ENCODE measurements at regions of chr17 and their contacts with region 1.

Region 1: GRCh38 chr17:51322390-51323029 is 62.2 kb downstream of the UTP18 start:
- DNase-seq: peak; percentile 8
- H3K4me3 Mint-ChIP-seq: no peak overlapping the region
- H3K27ac Mint-ChIP-seq: no peak overlapping the region
- H3K4me1 Mint-ChIP-seq: no peaks in the 10 kb centered on the region
- H3K27me3 Mint-ChIP-seq: peaks cover 5% of the 10 kb centered on the region

Region 2: GRCh38 chr17:51000835-51001638 is 321.5 kb before region 1 on chr17:
- CTCF ChIA-PET with region 1: no interaction called
- intact Hi-C with region 1: loop called (anchors 2 kb)
- DNase-seq: peak; percentile 18
- H3K4me3 Mint-ChIP-seq: no peak overlapping the region
- H3K27ac Mint-ChIP-seq: no peak overlapping the region
- H3K4me1 Mint-ChIP-seq: no peaks in the 10 kb centered on the region
- H3K27me3 Mint-ChIP-seq: no peaks in the 10 kb centered on the region

Region 3: GRCh38 chr17:51533219-51533618 is 210.7 kb after region 1 on chr17:
- CTCF ChIA-PET with region 1: interaction called, 4 read pairs
- intact Hi-C with region 1: loop called (anchors 1 kb)
- DNase-seq: no peak
- H3K4me3 Mint-ChIP-seq: no peak overlapping the region
- H3K27ac Mint-ChIP-seq: no peak overlapping the region
- H3K4me1 Mint-ChIP-seq: no peaks in the 10 kb centered on the region
- H3K27me3 Mint-ChIP-seq: no peaks in the 10 kb centered on the region

Region 4: DNA sequence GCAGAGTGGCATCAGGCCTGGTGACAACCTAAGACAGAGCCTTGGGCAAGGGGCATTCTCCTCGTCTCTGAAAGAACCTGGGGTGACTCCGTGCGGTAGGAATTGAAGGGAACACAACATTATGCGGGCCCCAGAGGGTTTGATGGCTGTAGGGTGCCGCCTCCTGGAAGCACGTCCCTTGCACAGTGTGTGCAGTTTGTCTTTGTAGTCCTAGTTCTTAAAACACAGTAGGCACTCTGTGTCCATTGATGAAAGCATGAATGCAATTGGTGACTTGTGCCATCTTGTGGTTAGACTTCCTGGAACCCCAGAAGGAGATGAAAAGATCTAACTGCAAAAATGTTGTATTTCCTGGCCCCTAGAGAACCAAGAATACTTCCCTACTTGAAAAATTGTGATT is 217.6 kb after region 1 on chr17:
- CTCF ChIA-PET with region 1: interaction called, 4 read pairs
- intact Hi-C with region 1: loop called (anchors 1 kb)
- DNase-seq: peak; percentile 39
- H3K4me3 Mint-ChIP-seq: no peak overlapping the region
- H3K27ac Mint-ChIP-seq: no peak overlapping the region
- H3K4me1 Mint-ChIP-seq: peaks cover 15% of the 10 kb centered on the region
- H3K27me3 Mint-ChIP-seq: no peaks in the 10 kb centered on the region